Gastrocnemius medialis (tissue), 4 donors: ENCODE measurements at regions of chr2 and their contacts with region 1.

Region 1: DNA sequence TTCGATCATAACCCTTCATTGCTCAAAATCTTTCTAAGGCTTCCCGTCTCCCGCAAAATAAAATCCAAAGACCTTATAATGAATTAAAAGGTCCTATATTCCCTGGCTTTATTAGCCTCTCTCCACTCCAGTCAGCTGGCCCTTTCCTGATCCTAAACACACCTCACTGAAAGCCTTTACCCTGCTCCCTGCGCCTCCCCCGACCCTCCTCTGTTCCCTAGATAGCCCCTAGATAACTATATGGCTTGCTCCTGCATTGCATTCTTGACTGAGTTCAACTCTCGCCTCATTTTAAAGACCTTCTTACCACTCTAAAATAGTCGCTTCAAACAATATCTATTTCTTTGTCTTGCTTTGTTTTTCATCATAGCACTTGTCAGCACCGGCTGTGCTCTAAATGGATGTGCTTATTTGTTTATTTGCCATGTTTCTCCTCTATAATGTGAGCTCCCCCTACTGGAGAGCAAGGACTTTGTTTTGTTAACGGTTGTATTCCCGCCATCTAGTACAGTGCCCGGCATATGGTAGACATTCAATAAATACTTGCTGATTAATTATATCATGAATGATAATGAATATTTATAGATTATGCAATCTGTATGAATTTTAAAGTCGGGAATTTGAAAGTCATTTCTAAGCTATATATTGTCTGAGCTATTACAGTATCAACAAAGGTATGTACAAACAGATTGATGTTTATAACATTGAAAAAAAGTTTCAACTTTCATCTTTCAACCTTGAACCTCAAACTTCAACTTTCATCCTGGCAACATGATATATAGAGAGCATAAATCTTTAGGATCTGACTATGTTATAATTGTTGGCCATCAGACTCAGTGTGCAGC is 32.4 kb upstream of the VIT start:
- DNase-seq: peak; percentile 12 to 27
- ATAC-seq: peak; percentile 82 to 84
- H3K4me3 ChIP-seq: no peak overlapping the region
- H3K27ac ChIP-seq: peak overlapping the region; percentile 9 to 65 (median 18)
- H3K4me1 ChIP-seq: peaks cover 18 to 21% of the 10 kb centered on the region in 2 donors
- H3K27me3 ChIP-seq: no peaks in the 10 kb centered on the region
- CTCF ChIP-seq: peak; percentile 71 to 80 (median 76)
- POLR2A ChIP-seq: no peak

Region 2: DNA sequence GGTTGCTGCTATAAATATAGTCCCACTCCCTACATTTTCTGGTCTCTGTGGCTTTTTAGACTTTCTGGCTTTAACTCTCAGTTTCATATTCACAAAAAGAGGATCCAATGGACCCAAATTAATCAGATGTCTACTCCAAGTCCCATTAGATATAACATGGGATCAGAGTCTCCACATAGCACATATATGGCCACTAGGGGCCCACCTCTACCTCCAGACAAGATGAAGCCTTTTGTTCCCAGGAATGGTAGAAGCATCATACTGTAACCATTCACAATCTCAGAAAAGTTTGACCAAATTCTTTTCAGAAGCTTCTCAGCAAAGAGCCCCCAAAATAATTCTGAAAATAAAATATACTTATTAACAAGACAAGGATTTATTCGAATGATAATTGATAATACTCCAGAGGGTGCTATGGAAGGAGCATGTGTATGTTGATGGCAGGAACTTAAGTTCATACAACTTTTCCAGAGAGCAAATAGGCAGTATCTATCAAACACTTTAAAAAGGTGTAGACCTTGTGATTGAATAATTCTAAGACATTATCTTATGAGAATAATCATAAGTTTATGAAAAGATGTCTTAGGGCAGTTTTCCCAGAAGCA is 690.8 kb before region 1 on chr2:
- in situ Hi-C with region 1: loop called in 1 of 4 experiments (anchors 10 kb)
- intact Hi-C with region 1: no loop called
- DNase-seq: no peak
- ATAC-seq: no peak
- H3K4me3 ChIP-seq: no peak overlapping the region
- H3K27ac ChIP-seq: peak overlapping the region; percentile 59 to 70 (median 63)
- H3K4me1 ChIP-seq: no peaks in the 10 kb centered on the region
- H3K27me3 ChIP-seq: no peaks in the 10 kb centered on the region
- CTCF ChIP-seq: peak in 1 of 5 experiments; percentile 33
- POLR2A ChIP-seq: no peak

Region 3: DNA sequence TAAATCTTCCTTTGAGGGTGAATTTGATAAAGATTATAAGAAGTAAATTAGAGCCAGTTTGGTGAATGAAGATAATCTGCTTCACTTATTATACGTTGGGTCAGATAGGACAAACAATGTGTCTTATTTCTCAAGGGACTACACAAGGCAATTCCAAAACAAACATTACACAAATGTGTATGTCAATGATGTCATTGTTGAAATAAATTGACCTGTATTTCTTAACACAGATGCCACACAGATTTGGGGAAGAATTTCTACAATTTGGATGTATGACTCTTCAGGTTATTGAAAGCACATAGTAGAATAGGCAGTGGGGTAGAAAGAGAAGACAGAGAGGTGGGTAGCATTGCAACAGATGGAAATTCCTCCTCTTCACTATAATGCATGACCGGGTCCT is 315.4 kb before region 1 on chr2:
- in situ Hi-C with region 1: loop called (anchors 5 kb)
- intact Hi-C with region 1: no loop called
- DNase-seq: no peak
- ATAC-seq: no peak
- H3K4me3 ChIP-seq: no peak overlapping the region
- H3K27ac ChIP-seq: no peak overlapping the region
- H3K4me1 ChIP-seq: no peaks in the 10 kb centered on the region
- H3K27me3 ChIP-seq: no peaks in the 10 kb centered on the region
- CTCF ChIP-seq: no peak
- POLR2A ChIP-seq: no peak

Region 4: DNA sequence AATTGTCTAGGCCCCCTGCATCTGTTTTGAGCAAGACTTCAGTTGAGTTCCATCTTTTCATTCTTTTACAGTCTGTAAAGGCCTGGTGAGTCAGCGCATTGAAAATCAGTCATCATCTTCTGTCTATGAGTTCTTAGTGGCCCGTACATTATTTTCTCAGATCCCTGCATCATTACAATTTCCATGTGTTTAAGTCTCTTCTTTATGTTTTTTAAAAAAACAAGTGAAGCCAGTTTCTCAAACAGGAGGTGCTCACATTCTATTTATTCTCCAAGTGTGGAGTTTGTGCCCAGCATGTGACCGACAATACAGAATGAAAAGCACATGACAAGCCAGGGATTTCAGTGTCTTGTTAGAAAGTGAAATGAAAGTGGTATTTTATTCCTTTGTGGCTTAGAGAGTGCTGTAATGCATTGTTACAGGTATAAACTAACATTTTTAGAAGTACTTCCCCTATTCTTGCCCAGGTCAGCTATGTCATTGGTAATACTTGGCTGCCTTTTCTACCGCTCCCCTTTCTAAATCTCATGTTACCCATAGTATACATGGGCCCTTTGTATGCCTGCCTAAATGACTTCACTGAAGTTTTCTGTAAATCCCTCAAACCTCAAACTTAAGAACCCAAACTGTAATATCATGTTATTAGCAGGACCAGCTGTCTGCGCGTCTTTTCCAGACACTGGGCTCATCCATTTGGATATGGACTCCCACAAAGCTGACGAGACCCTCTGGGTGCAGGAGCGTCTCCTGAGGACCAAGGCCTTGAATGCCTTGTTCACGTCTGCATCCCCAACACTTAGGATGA is 133.7 kb before region 1 on chr2:
- in situ Hi-C with region 1: loop called (anchors 10 to 25 kb)
- intact Hi-C with region 1: no loop called
- DNase-seq: no peak
- ATAC-seq: no peak
- H3K4me3 ChIP-seq: no peak overlapping the region
- H3K27ac ChIP-seq: peak overlapping the region; percentile 41 to 67 (median 58)
- H3K4me1 ChIP-seq: peaks cover 32 to 33% of the 10 kb centered on the region in 2 donors
- H3K27me3 ChIP-seq: no peaks in the 10 kb centered on the region
- CTCF ChIP-seq: no peak
- POLR2A ChIP-seq: no peak